ENCODE measurements at regions of chr6 and their contacts with region 1.

Region 1: DNA sequence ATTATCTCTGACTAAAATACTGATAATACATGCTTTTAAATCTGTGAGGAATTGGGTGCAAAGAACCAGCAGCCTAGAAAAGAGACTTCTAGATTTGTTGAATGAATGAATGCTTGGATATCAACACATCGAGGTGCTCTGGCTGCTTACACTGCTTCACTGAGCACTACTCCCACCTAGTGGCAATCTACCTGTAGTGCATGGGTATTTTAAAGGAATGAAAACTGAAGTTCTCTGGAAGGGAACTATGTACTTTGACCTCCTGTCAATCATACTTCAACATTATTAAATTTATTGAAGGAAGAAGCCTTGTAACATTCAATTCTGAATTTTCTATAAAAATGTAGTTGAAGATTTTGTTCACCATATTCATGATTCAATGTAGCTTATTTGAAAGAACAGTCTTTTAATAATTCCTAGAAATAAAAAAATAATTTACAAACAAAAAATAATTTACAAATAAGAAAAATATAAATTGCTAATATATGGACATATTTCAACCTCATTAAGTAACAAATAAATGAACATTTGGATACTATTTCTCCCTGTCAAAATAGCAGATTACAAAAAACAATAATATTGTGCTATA is 111.2 kb upstream of the MMS22L start:
- DNase-seq: peak; percentile 68
- H3K4me3 Mint-ChIP-seq: no peak overlapping the region
- H3K27ac Mint-ChIP-seq: no peak overlapping the region
- H3K4me1 Mint-ChIP-seq: no peaks in the 10 kb centered on the region
- H3K27me3 Mint-ChIP-seq: no peaks in the 10 kb centered on the region
- CTCF ChIP-seq: peak; percentile 76

Region 2: GRCh38 chr6:97068211-97068610 is 326.0 kb before region 1 on chr6:
- CTCF ChIA-PET with region 1: no interaction called
- intact Hi-C with region 1: loop called (anchors 1 kb)
- DNase-seq: peak; percentile 32
- H3K4me3 Mint-ChIP-seq: no peak overlapping the region
- H3K27ac Mint-ChIP-seq: no peak overlapping the region
- H3K4me1 Mint-ChIP-seq: no peaks in the 10 kb centered on the region
- H3K27me3 Mint-ChIP-seq: no peaks in the 10 kb centered on the region
- CTCF ChIP-seq: peak; percentile 40

Region 3: GRCh38 chr6:97186416-97186999 is 207.7 kb before region 1 on chr6:
- CTCF ChIA-PET with region 1: no interaction called
- intact Hi-C with region 1: loop called (anchors 1 kb)
- DNase-seq: peak; percentile 67
- H3K4me3 Mint-ChIP-seq: no peak overlapping the region
- H3K27ac Mint-ChIP-seq: no peak overlapping the region
- H3K4me1 Mint-ChIP-seq: no peaks in the 10 kb centered on the region
- H3K27me3 Mint-ChIP-seq: no peaks in the 10 kb centered on the region
- CTCF ChIP-seq: peak; percentile 66

Region 4: GRCh38 chr6:97215157-97215769 is 179.0 kb before region 1 on chr6:
- CTCF ChIA-PET with region 1: interaction called, 3 read pairs
- intact Hi-C with region 1: loop called (anchors 1 kb)
- DNase-seq: peak; percentile 13
- H3K4me3 Mint-ChIP-seq: no peak overlapping the region
- H3K27ac Mint-ChIP-seq: no peak overlapping the region
- H3K4me1 Mint-ChIP-seq: no peaks in the 10 kb centered on the region
- H3K27me3 Mint-ChIP-seq: no peaks in the 10 kb centered on the region
- CTCF ChIP-seq: peak; percentile 27

Region 5: GRCh38 chr6:97282726-97283617 is 111.3 kb before region 1 on chr6 and contains the start of gene MMS22L:
- CTCF ChIA-PET with region 1: no interaction called
- intact Hi-C with region 1: loop called (anchors 2 kb)
- DNase-seq: peak; percentile 92
- H3K4me3 Mint-ChIP-seq: peak within 1 kb of the TSS; percentile 78
- H3K27ac Mint-ChIP-seq: peak within 1 kb of the TSS; percentile 79
- H3K4me1 Mint-ChIP-seq: no peaks in the 10 kb centered on the region
- H3K27me3 Mint-ChIP-seq: no peaks in the 10 kb centered on the region
- CTCF ChIP-seq: no peak
- total RNA-seq, gene MMS22L: 26.0 and 30.8 TPM in 2 replicates